Caco-2 (cell line): ENCODE measurements at regions of chr20 and their contacts with region 1.

Region 1: DNA sequence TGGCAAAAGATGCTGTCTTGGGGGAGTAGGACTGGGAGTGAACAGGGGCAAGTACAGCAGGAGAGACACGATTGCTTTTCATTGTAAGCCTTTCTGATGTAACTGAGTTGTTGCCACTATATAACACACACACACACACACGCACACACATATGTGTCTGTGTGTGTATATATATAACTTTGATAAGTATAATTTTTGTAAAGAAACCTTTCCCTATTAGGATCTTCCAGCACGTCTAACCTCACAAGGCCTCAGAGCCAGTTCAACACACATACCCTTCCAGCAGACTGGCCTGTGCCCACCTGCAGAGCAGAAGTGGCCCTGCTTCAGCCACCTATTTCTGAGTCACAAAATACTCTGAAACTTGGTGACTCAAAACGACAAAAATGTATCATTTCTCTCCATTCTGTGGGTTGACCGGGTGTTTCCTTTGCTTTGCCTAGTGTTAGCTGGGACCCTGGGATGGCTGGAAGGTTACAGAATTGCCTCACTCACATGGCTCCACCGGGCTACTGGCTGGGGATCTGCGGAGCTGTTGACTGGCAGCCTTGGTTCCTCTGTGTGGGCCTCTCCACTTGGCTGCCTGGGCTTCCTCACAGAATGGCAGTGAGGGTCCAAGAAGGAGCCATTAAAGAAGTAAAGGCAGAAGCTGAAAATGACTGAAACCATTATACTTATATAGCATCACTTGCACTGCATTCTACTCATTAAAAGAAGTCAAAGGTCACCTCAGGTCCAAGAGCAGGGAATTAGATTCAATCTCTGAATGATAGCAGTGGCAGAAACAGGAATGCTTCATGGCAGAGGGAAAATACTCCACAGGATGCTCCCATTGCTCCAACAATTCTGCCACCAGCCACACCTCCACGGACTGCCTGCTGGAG is 126.4 kb downstream of the BANF2 start:
- DNase-seq: no peak
- H3K4me3 ChIP-seq: no peak overlapping the region
- H3K4me3 Mint-ChIP-seq: no peak overlapping the region
- H3K27ac Mint-ChIP-seq: no peak overlapping the region
- H3K4me1 ChIP-seq: peaks cover 16% of the 10 kb centered on the region
- H3K4me1 Mint-ChIP-seq: peaks cover 16% of the 10 kb centered on the region
- H3K27me3 ChIP-seq: no peaks in the 10 kb centered on the region
- H3K27me3 Mint-ChIP-seq: no peaks in the 10 kb centered on the region
- CTCF ChIP-seq: no peak

Region 2: DNA sequence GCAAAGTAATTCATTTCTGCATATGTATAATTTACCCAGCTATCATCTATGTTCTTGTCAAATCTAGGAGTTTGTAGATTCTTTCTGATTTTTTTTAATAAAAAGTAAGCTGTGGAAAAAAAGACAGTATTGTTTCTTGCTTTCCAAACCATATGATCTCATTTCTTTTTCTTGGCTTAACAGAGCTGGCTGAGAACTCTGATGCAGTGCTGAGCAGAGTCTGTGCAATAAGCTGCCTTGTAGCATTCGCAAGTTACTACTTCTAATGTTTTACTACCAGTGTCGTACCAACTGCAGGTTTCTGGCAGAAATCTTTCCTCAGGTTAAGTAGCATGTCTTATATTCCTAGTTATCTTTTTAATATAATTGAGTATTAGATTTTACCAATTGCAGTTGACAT is 159.7 kb before region 1 on chr20:
- CTCF ChIA-PET with region 1: no interaction called
- POLR2A ChIA-PET with region 1: no interaction called
- intact Hi-C with region 1: loop called (anchors 5 kb)
- DNase-seq: no peak
- H3K4me3 ChIP-seq: no peak overlapping the region
- H3K4me3 Mint-ChIP-seq: no peak overlapping the region
- H3K27ac Mint-ChIP-seq: no peak overlapping the region
- H3K4me1 ChIP-seq: peaks cover 4% of the 10 kb centered on the region; the same call in 1 of the 2 replicates
- H3K4me1 Mint-ChIP-seq: peaks cover 37% of the 10 kb centered on the region
- H3K27me3 ChIP-seq: no peaks in the 10 kb centered on the region
- H3K27me3 Mint-ChIP-seq: no peaks in the 10 kb centered on the region
- CTCF ChIP-seq: no peak

Region 3: DNA sequence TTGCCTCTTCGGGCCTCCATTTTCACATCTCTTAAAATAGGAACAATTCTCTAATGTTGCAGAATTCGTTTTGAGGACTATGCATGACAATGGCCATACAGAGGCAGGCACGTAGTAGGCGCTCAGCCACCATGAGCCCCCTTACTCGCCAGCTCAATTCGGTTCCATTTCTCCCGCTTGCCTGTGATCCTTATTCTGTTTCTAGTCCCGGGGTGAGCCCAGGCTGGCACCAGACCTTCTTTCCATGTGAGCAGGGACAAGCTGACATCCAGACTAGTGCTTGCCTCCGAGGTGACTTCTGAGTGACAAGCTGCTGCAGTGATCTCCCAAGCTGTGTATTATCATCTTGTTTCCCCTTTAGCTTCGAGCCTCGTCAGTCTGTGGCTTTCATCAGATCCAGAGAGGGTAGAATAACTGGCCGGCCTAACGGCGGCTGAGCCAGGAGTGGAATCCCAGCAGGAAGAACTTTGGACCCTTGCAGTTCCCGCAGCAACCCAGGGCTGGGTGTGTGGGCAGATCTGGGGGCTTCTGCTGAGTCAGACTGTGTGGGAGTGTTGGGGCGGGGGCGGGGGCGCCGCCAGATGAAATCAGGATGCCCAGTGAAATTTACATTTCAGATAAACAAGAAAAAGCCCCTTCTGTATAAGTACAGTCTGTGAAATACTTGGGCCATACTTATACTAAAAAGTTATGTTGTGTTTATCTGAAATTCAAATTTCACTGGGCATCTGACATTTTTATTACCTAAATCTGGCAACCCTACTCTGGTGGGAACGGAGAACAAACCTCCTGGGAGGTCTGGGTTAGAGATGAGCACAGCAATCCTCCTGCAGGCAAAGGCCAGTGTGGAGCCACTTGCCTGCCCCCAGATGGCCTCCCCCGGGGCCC is 115.6 kb before region 1 on chr20:
- CTCF ChIA-PET with region 1: no interaction called
- POLR2A ChIA-PET with region 1: no interaction called
- intact Hi-C with region 1: loop called (anchors 10 kb)
- DNase-seq: peak; percentile 76 to 83
- H3K4me3 ChIP-seq: peak overlapping the region; percentile 46
- H3K4me3 Mint-ChIP-seq: peak overlapping the region; percentile 68
- H3K27ac Mint-ChIP-seq: peak overlapping the region; percentile 82
- H3K4me1 ChIP-seq: peaks cover 78% of the 10 kb centered on the region
- H3K4me1 Mint-ChIP-seq: peaks cover 54% of the 10 kb centered on the region
- H3K27me3 ChIP-seq: no peaks in the 10 kb centered on the region
- H3K27me3 Mint-ChIP-seq: no peaks in the 10 kb centered on the region
- CTCF ChIP-seq: no peak

Region 4: DNA sequence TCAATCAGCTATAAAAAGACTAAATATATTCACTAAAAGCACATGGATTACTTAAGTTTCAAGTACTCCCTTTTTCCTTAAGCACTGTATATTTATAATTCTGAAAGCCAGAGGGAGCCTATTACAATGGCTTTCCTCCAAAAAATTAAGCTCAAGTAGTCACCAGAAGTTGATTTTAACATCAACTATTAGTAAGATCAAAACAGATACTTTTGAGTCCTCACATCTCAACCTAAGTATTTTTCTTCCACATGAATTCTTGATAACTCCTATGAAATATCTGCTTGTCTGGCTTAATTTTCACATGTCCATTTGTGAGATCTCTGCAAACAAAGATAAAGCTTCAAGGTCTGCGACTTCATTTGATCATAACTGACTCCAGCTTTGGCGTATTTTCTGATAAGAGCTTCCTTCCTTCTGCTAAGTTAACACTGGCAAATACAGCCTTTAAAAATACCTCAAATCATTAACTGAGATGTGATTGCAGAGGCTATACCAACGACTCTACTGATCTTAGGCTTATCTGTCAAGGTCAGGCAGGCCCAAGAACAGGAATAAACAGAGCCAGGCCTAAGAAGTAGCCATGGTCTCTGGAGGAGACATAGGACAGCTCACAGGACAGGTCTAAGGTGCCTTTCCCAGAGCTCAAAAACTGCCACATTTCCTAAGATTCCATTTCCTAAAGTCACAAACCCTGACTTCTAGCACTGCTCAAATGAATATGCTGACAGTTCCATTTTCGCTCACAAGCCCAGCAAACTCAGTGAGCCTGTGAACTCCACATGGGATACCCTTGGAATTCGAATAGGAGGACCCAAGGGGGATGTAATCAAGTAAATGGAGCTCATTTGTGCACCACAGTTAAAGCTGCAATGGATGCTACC is 132.4 kb after region 1 on chr20:
- CTCF ChIA-PET with region 1: no interaction called
- POLR2A ChIA-PET with region 1: interaction called, 11 read pairs
- intact Hi-C with region 1: no loop called
- DNase-seq: peak; percentile 60 to 67
- H3K4me3 ChIP-seq: no peak overlapping the region
- H3K4me3 Mint-ChIP-seq: peak overlapping the region; percentile 29
- H3K27ac Mint-ChIP-seq: peak overlapping the region; percentile 83
- H3K4me1 ChIP-seq: peaks cover 57% of the 10 kb centered on the region
- H3K4me1 Mint-ChIP-seq: peaks cover 60% of the 10 kb centered on the region
- H3K27me3 ChIP-seq: no peaks in the 10 kb centered on the region
- H3K27me3 Mint-ChIP-seq: no peaks in the 10 kb centered on the region
- CTCF ChIP-seq: no peak